AG04450 (cell line): ENCODE measurements at regions of chr10 and their contacts with region 1.

Region 1: GRCh38 chr10:93006435-93007039 is 54.1 kb upstream of the CYP26C1 start:
- DNase-seq: peak; percentile 41
- H3K4me3 ChIP-seq: no peak overlapping the region
- H3K27ac ChIP-seq: no peak overlapping the region
- H3K27me3 ChIP-seq: no peaks in the 10 kb centered on the region
- CTCF ChIP-seq: peak; percentile 79

Region 2: DNA sequence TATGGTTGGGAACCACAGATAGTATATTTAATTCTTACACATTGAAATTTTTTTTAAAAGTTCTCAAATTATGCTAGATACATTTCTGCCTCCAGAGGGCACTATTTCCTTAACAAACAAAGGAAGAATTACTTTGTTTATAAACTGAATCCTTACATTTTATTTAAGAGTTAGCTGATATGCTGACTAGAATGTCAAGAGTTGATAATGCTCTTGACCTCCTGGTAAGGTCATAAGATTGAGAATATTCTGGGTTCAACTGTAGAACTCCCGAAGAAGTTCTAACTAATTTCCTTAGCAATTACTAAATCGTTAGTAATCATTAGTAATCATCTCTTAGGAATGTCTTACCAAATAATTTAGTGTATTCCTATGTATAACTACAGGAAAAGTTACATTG is 41.2 kb before region 1 on chr10:
- CTCF ChIA-PET with region 1: interaction called, 10 read pairs
- POLR2A ChIA-PET with region 1: no interaction called
- DNase-seq: no peak
- H3K4me3 ChIP-seq: no peak overlapping the region
- H3K27ac ChIP-seq: no peak overlapping the region
- H3K27me3 ChIP-seq: no peaks in the 10 kb centered on the region
- CTCF ChIP-seq: peak; percentile 64

Region 3: DNA sequence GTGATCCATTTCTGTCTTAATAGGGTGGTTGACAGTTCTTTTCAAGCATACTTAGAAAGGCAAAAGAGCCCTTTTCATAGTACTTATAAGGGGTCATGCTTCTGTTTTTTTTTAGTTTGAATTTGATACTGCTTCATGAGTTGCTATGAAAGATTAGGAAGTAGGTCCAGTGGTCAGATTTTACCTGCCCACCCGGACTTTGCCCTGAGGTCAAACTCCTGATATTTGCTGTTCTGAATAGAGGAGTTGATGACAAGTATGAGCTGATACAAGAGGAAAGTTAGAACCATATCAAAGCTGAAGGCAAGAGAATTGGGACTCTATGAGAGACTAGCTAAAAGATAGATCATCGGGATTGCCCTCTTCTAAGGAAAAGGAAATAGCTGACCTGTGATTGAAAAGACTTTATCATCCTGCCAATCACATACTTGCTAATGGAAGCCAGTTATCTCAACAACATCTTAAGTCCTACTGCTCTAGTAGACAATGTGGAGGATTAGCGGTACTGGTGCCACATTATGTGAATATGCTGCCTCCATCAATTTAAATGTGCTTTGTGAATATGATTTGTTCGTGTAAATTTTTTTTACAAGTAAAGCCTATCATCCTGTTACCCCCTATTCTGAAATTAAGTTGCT is 16.6 kb after region 1 on chr10:
- CTCF ChIA-PET with region 1: interaction called, 21 read pairs
- POLR2A ChIA-PET with region 1: no interaction called
- DNase-seq: no peak
- H3K4me3 ChIP-seq: no peak overlapping the region
- H3K27ac ChIP-seq: no peak overlapping the region
- H3K27me3 ChIP-seq: no peaks in the 10 kb centered on the region
- CTCF ChIP-seq: no peak

Region 4: DNA sequence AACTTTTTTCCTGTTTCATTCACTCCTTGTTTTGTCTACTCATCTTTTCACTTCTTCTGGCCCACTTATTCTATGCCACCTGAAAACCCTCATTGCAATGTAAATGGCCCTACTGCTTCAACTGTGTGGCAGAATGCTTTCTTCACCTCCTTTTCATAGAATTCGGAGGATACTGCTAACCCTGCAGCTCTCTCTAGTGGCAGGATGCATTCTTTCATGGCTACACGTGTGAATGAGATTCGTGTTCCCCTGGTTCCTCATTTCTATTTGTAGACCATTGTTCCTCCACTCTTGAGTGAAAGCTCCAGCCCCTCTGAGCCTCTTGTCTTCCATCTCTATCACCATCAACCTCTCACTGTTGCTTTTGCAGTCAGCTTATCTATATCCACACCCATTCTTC is 33.2 kb after region 1 on chr10:
- CTCF ChIA-PET with region 1: interaction called, 39 read pairs
- POLR2A ChIA-PET with region 1: no interaction called
- DNase-seq: no peak
- H3K4me3 ChIP-seq: no peak overlapping the region
- H3K27ac ChIP-seq: no peak overlapping the region
- H3K27me3 ChIP-seq: no peaks in the 10 kb centered on the region
- CTCF ChIP-seq: peak; percentile 70

Region 5: DNA sequence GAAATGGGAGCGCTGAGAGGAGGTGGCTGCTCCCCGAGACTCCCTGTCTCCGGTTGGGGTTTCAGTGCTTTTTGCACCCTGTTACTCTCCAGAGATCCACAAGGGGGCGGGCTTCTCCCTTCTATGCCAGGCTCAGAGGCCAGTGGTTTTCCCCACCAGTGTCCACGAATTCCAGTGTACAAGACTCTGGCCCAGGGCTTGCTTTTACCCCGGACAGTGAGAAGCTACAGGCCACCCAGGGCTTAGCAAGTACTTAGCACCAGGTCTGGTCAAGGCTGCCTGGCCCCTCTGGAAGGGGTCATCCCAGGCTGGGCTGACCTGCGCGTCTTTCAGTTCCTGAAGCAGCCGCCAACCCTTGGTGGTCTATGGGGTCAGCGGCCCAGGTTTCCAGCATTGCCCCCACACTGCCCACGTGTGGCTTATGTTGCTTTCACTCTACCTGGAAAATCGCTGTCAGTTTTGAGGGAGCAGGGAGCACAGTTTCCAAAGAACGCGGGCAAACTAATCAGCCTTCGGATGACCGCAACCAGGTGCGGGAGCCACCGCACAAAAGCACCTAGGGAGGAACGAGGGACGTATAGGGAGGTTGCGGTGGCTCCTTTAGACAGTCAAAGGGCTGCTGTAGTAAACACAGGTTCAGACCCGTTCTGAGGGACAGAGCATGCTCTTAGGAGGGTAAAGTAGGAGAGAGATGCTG is 74.0 kb after region 1 on chr10:
- CTCF ChIA-PET with region 1: interaction called, 14 read pairs
- POLR2A ChIA-PET with region 1: no interaction called
- DNase-seq: no peak
- H3K4me3 ChIP-seq: peak overlapping the region; percentile 29; the same call in 1 of the 2 replicates
- H3K27ac ChIP-seq: no peak overlapping the region
- H3K27me3 ChIP-seq: peaks cover 31% of the 10 kb centered on the region
- CTCF ChIP-seq: peak; percentile 86

Region 6: GRCh38 chr10:93515071-93516005 is 508.8 kb after region 1 on chr10:
- CTCF ChIA-PET with region 1: interaction called, 10 read pairs
- POLR2A ChIA-PET with region 1: no interaction called
- DNase-seq: no peak
- H3K4me3 ChIP-seq: no peak overlapping the region
- H3K27ac ChIP-seq: no peak overlapping the region
- H3K27me3 ChIP-seq: no peaks in the 10 kb centered on the region
- CTCF ChIP-seq: no peak